Aorta (tissue), 5 donors: ENCODE measurements at regions of chr21 and their contacts with region 1.

Region 1: DNA sequence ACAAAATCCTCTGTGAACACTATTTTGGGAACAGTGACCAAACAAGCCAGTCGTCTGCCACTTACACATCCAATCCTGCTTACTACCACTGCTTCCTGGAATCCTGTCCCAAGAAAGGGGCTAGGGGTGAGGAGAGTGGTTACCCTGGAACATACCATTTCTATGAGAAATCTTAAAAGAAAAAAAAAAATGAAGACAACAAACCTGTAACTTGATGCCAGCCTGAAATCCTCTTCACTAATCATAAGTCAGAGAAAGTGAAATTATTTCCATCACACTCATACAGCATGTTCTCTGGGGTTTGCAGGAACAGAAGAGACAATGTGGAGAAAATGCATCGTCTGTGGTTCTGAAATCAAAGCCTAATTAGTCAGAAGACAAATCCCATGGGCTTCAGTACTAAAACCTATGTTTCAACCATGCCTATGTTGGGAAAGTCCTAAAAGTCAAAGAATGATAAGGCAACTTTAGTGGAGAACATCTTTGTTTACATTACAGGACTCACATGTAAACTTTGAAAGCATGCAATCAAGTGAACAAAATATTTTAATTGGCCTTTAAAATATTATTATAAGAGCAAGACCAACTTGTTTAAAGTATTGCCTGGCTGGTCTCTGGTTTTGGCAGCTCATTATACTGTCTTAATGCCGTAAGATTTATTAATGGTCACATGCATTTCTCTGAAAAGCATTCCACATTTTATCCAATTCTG is 220.7 kb downstream of the LTN1 start:
- DNase-seq: no peak
- ATAC-seq: peak; percentile 81
- H3K4me3 ChIP-seq: no peak overlapping the region
- H3K27ac ChIP-seq: peak overlapping the region; percentile 64 to 99
- H3K4me1 ChIP-seq: peaks cover 2 to 10% of the 10 kb centered on the region in 2 donors
- H3K27me3 ChIP-seq: no peaks in the 10 kb centered on the region

Region 2: DNA sequence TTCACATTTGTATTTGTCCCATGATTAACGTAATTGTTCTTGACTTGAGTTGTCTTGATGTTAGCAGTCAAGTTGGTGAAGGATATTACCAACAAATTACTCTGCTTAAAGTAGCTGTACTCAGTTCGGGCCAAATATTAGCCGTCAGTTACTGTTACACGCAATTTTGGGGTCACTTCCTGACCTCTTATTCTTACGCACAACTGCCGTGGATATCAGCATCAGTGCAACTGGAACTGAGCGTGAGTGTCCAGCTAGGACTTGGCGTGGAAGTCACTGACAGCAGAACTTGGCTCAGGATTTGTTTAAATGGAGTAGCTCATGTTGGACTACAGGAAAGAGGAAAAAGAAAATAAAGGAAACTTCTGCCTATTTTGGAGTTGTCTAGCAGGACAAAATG is 1983.2 kb before region 1 on chr21:
- intact Hi-C with region 1: loop called in 1 of 2 experiments (anchors 10 kb)
- DNase-seq: peak in 1 of 2 donors; percentile 78
- ATAC-seq: peak; percentile 85
- H3K4me3 ChIP-seq: no peak overlapping the region
- H3K27ac ChIP-seq: peak overlapping the region in 1 of 2 donors; percentile 71
- H3K4me1 ChIP-seq: peaks cover 0 to 12% of the 10 kb centered on the region in 2 donors
- H3K27me3 ChIP-seq: no peaks in the 10 kb centered on the region

Region 3: DNA sequence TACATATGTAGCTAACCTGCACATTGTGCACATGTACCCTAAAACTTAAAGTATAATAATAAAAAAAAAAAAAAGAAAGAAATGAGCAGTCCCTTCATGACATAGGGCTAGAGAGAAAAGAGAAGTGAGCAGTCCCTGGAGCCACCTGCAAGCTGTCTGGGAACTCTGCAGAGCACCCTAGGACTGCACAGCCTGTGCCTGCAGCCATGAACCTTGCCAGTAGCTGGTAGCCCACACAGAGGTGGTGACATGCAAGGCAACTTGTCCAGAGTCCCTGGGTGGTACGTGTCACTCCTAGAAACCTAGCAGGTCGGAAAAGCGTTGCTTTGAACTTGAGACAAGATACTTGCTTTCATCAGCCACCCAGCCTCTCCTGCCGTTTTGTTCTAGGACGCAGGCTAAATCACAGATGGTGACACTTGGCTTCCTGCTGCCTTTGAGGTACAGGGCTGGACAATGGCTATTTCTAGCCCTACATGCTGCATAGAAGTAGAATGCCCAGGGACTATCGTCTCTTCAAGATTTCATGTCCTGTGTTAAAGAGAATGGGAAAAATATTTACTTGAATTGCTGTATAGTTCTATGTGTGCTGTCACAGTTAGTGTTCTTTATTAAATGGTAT is 40.1 kb before region 1 on chr21:
- intact Hi-C with region 1: no loop called
- DNase-seq: no peak
- ATAC-seq: no peak
- H3K4me3 ChIP-seq: no peak overlapping the region
- H3K27ac ChIP-seq: no peak overlapping the region
- H3K4me1 ChIP-seq: no peaks in the 10 kb centered on the region
- H3K27me3 ChIP-seq: no peaks in the 10 kb centered on the region

Region 4: DNA sequence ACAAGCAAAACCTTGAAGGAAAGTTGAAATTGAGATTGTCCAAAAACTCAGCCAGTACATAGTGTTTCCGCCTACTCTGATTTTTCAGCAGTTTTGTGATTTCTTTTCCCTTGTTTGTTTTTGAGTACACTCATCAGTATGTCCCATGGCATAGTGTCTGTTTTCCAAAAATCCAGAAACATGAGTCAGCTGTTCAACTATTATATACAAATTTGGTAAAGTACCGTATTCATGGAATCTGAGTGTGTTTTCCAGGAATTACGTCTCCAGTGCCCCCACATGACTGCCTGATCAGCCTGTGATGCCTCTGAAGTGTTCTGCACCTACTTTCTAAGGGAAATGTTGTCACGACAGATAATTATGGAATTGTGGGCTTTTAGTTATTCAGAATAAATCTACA is 33.9 kb after region 1 on chr21:
- intact Hi-C with region 1: loop called (anchors 2 to 5 kb)
- DNase-seq: no peak
- ATAC-seq: peak; percentile 80
- H3K4me3 ChIP-seq: peak overlapping the region in 1 of 2 donors; percentile 34
- H3K27ac ChIP-seq: peak overlapping the region; percentile 71 to 94
- H3K4me1 ChIP-seq: peaks cover 2 to 5% of the 10 kb centered on the region in 2 donors
- H3K27me3 ChIP-seq: no peaks in the 10 kb centered on the region

Region 5: DNA sequence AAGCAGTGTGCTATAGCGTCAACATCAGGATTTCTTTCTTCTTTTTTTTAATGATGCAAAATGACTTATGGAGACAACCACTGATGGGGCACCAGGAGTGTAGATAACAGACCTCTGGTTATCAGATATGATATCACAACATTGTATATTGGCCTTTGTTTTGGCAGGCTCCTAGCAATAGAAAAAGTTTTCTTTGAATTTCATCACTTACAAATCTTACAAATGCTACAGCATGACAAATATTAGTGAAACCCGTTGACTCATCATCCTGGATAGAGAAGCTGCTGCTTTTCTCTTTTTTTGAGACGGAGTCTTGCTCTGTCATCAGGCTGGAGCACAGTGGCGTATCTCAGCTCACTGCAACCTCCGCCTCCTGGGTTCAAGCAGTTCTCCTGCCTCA is 127.8 kb after region 1 on chr21:
- intact Hi-C with region 1: loop called in 1 of 2 experiments (anchors 5 kb)
- DNase-seq: no peak
- ATAC-seq: no peak
- H3K4me3 ChIP-seq: peak overlapping the region; percentile 12 to 40
- H3K27ac ChIP-seq: peak overlapping the region; percentile 54 to 77
- H3K4me1 ChIP-seq: peaks cover 0 to 3% of the 10 kb centered on the region in 2 donors
- H3K27me3 ChIP-seq: no peaks in the 10 kb centered on the region

Region 6: DNA sequence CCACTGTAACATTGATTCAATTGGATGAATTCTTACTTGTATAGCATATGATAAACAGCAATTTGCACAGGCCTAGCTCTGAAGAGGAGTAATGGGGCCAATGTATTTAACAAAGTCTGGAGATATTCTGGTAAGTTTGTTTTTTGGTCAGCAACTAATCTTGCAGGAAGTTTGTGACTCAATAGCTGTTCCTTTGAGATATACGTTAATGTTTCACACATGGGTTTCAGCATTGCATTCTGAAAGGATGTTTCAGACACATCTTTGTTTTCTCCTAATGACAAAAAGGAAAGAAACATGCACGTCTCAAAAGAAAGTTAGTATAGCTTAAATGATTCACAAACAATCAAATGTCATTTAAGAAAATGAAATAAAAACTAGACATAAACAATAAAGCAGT is 171.7 kb after region 1 on chr21:
- intact Hi-C with region 1: loop called in 1 of 2 experiments (anchors 10 kb)
- DNase-seq: no peak
- ATAC-seq: no peak
- H3K4me3 ChIP-seq: no peak overlapping the region
- H3K27ac ChIP-seq: peak overlapping the region in 1 of 2 donors; percentile 57
- H3K4me1 ChIP-seq: no peaks in the 10 kb centered on the region
- H3K27me3 ChIP-seq: no peaks in the 10 kb centered on the region